ENCODE measurements at regions of chr14 and their contacts with region 1.

Region 1: GRCh38 chr14:70416725-70417349 is at the start of gene SYNJ2BP:
- DNase-seq: peak; percentile 88
- H3K4me3 ChIP-seq: peak within 1 kb of the TSS; percentile 70 to 85 (median 82)
- H3K27ac ChIP-seq: peak within 1 kb of the TSS; percentile 74
- H3K4me1 ChIP-seq: no peaks in the 10 kb centered on the region
- H3K27me3 ChIP-seq: peaks cover 2% of the 10 kb centered on the region
- CTCF ChIP-seq: no peak
- total RNA-seq, gene SYNJ2BP: 16.2 to 18.4 TPM

Region 2: DNA sequence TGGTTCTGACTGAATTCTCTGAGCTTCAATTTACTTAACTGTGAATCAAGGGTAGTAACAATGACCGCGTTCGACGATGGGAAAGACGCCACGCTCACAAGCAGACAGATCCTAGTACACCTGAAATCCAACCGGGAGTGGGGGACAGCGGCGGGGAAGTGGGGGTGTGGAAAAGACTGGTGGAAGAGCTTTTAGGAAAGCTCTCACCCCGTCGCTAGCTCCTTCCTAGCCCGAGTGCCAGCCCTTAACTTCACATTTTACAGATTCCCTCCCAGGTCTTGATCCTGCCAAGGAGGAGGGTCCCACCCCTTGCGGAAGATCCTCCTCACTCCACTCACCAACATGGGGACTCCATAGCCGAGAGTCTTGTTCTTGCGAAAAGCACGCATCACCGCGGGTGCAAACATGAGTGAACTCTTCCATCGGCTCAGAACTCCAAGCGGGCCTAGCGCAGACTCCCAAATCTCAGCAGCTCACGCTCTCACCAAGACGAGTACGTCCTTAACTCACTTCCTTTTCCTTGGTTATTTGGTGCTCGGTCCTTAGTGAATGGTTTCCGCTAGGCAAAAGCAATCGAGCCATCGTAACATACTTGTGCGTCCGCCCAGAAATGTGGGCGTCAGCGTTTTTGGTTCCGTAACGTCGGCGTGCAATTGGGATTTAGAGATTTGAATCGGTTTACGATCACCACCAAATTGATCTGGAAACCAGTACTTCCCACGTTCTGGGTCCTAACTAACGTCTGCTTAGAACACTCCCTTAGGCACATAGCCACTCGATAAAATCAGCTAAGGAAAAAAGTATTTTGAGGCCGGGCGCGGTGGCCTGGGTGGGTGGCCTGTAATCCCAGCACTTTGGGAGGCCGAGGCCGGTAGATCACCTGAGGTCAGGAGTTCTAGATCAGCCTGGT is 57.4 kb before region 1 on chr14 and contains the start of gene COX16:
- CTCF ChIA-PET with region 1: no interaction called
- dilution Hi-C with region 1: no loop called
- in situ Hi-C with region 1: no loop called
- intact Hi-C with region 1: loop called (anchors 2 kb)
- DNase-seq: peak; percentile 97
- H3K4me3 ChIP-seq: peak within 1 kb of the TSS; percentile 71 to 97 (median 89)
- H3K27ac ChIP-seq: peak within 1 kb of the TSS; percentile 67
- H3K4me1 ChIP-seq: peaks cover 10% of the 10 kb centered on the region
- H3K27me3 ChIP-seq: no peaks in the 10 kb centered on the region
- CTCF ChIP-seq: no peak
- total RNA-seq, gene COX16: 26.2 to 31.6 TPM